ENCODE measurements at regions of chr19 and their contacts with region 1.

Region 1: GRCh38 chr19:11597202-11598102 is at the start of gene ZNF627:
- DNase-seq: peak; percentile 99
- ATAC-seq: peak; percentile 100
- H3K4me3 Mint-ChIP-seq: peak within 1 kb of the TSS; percentile 97
- H3K27ac Mint-ChIP-seq: peak within 1 kb of the TSS; percentile 91
- H3K4me1 Mint-ChIP-seq: peaks cover 34% of the 10 kb centered on the region
- H3K27me3 Mint-ChIP-seq: no peaks in the 10 kb centered on the region
- total RNA-seq, gene ZNF627: 6.4 to 6.7 TPM

Region 2: DNA sequence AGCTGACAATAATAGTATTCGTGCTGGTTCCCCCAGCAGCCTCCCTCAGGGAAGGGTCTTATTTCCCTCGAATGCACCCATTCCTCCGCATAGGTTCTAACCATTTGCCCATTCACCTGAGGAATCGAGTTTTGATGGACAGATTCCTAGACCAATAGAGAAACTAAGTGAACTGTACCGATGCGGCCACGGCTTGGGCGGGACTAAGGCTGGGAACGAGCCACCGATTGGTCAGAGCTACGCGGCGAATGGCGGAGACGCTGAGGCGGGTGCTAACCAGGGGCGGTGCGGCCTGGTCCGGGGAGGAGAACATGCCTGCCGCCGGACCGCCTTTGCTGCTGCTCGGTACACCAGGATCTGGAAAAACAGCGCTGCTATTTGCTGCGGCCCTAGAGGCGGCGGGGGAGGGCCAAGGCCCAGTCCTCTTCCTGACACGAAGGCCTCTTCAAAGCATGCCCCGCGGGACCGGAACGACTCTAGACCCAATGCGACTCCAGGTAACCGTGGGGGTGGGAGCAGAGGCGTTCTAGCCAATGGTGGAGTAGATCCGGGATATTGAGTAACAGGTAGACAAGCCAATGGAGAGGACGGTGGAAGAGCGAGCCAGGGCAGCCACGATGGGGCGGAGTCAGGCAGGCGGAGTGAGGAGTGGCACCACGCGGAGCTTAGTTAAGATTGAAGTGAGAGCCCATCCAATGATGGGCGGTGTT is 222.9 kb before region 1 on chr19 and contains the start of gene SWSAP1:
- CTCF ChIA-PET with region 1: no interaction called
- POLR2A ChIA-PET with region 1: no interaction called
- intact Hi-C with region 1: loop called in 1 of 2 experiments (anchors 2 kb)
- DNase-seq: peak; percentile 98
- ATAC-seq: peak; percentile 92
- H3K4me3 Mint-ChIP-seq: no peak within 1 kb of the TSS
- H3K27ac Mint-ChIP-seq: no peak within 1 kb of the TSS
- H3K4me1 Mint-ChIP-seq: peaks cover 28% of the 10 kb centered on the region
- H3K27me3 Mint-ChIP-seq: no peaks in the 10 kb centered on the region
- total RNA-seq, gene SWSAP1: 1.5 to 1.7 TPM

Region 3: GRCh38 chr19:11422163-11423021 is 175.1 kb before region 1 on chr19:
- CTCF ChIA-PET with region 1: no interaction called
- POLR2A ChIA-PET with region 1: no interaction called
- intact Hi-C with region 1: no loop called
- DNase-seq: peak; percentile 82
- ATAC-seq: peak; percentile 78
- H3K4me3 Mint-ChIP-seq: peak overlapping the region; percentile 52
- H3K27ac Mint-ChIP-seq: no peak overlapping the region
- H3K4me1 Mint-ChIP-seq: peaks cover 31% of the 10 kb centered on the region
- H3K27me3 Mint-ChIP-seq: peaks cover 54% of the 10 kb centered on the region

Region 4: DNA sequence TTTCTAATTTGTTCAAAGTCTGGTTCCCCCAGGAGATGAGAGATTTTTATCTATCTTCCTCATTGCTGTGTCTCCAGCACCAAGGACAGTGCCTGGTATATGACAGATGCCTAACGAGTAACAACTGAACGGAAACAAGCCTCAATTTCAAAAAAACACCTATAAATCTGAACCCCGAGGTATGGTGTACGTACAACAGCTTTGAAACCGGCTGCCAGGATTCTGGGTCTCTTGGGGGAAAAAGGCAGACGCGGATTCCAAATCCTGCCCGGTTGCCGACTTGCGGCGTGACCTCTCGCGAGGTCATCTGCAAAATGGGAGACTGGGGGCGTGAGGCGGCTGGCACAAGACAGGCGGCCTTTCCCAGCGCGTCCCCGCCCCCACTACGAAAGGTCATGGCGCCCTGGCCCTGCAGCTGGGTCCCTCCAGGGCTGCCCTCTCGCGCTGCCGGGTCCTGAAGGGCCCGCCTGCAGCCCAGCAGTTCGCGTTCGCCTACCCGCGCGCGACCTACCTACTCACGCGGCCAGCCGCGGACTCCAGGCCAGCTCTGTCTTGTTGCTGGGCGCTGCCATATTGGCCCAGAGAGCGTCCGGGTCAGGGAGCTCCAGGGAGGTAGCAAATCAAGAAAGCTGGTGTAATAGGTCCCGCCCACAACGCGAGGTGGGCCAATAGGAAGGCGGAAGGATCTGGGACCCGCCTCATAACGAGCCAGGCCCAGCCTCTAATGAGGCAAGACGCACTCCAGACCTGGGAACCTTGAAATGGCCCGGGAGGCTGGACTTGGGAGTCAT is 68.7 kb before region 1 on chr19 and contains the start of gene ECSIT:
- CTCF ChIA-PET with region 1: no interaction called
- POLR2A ChIA-PET with region 1: no interaction called
- intact Hi-C with region 1: loop called in 1 of 2 experiments (anchors 1 kb)
- DNase-seq: peak; percentile 97
- ATAC-seq: peak; percentile 97
- H3K4me3 Mint-ChIP-seq: peak within 1 kb of the TSS; percentile 99
- H3K27ac Mint-ChIP-seq: peak within 1 kb of the TSS; percentile 96
- H3K4me1 Mint-ChIP-seq: peaks cover 28% of the 10 kb centered on the region
- H3K27me3 Mint-ChIP-seq: no peaks in the 10 kb centered on the region
- total RNA-seq, gene ECSIT: 37.2 to 44.6 TPM

Region 5: DNA sequence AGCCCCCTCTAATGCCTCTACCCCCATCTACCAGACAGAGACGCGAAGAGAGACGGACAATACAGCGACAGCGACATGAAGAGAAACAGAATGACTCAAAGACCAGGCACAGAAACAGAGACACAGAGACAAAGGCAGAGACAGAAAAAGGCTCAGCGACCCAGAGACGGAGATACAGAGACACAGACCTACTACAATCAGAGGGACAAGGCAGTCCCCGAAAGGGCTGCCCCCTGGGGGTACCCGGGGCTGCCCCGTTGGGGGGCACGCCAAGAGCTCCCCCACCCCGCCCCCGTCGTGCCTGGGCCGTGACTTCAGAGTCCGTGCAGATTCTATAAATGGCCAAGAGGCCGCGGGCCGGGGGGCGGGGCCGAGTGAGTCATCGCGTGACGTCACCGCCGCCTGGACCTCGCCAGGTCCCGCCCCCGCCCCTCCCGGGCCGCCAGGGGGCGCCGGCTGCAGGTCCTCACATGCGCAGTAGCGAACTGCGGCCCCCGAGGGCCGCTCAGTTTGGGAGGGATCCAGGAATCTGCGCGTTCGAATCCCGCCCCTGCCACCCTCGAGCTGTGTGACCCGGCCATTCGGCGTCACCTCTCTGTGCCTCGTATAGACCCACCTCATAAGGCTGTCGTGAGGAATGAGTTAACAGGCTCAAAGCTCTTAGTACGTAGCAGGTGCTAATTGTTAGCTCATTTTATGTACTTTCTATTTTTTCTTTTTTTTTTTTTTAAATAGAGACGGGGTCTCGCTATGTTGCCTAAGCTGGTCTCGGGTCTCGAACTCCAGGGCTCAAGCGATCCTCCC is 61.5 kb before region 1 on chr19:
- CTCF ChIA-PET with region 1: interaction called, 3 read pairs
- POLR2A ChIA-PET with region 1: no interaction called
- intact Hi-C with region 1: loop called in 1 of 2 experiments (anchors 2 kb)
- DNase-seq: peak; percentile 94
- ATAC-seq: peak; percentile 76
- H3K4me3 Mint-ChIP-seq: peak overlapping the region; percentile 2
- H3K27ac Mint-ChIP-seq: peak overlapping the region; percentile 51
- H3K4me1 Mint-ChIP-seq: peaks cover 17% of the 10 kb centered on the region
- H3K27me3 Mint-ChIP-seq: peaks cover 14% of the 10 kb centered on the region

Region 6: DNA sequence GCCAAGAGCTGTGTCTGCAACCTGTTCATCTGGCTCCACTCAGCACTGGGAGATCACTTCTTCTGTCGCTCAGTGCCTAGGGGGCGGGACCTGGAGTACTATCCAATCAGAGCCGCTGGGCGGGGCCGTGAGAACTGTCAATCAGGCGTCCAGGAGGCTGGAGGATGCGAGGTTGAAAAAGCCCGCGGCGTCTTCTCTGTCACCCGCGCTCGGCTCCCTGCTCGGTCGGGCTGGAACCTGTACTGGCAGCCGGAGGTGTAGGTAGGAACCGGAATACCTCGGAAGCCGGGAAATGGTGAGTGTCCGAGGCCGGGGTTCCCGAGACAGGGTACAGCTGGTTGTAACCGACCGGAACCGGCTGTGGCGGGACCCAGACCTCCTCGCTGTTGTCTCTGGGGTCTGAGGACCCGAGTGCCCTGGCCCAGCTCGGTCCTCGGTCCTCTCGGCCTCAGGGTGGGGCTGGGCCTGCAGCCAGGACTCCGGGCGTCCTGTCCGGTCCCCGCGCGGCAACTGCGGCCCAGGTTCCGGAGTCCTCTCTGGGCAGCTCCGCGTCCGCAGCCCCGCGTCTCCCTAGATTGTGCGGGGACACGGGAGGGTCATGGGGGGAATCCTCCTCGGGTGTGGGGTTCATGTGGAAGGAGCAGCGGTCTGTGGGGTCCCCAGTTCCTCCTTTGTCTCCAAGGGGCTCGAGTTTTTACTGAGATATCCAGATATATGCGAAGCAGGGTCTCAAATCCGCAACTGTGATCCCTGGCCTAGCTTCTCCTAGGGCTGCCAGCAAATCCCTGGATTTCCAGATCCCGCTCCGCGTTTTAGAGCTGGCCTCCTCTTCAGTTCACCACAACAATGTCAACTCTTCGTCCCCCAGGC is 42.4 kb after region 1 on chr19:
- CTCF ChIA-PET with region 1: no interaction called
- POLR2A ChIA-PET with region 1: no interaction called
- intact Hi-C with region 1: loop called in 1 of 2 experiments (anchors 1 kb)
- DNase-seq: peak; percentile 98
- ATAC-seq: peak; percentile 100
- H3K4me3 Mint-ChIP-seq: peak overlapping the region; percentile 76
- H3K27ac Mint-ChIP-seq: no peak overlapping the region
- H3K4me1 Mint-ChIP-seq: no peaks in the 10 kb centered on the region
- H3K27me3 Mint-ChIP-seq: peaks cover 10% of the 10 kb centered on the region

Region 7: GRCh38 chr19:11738746-11739620 is 141.5 kb after region 1 on chr19 and contains the start of gene ZNF823:
- CTCF ChIA-PET with region 1: no interaction called
- POLR2A ChIA-PET with region 1: no interaction called
- intact Hi-C with region 1: loop called in 1 of 2 experiments (anchors 1 kb)
- DNase-seq: peak; percentile 99
- ATAC-seq: peak; percentile 100
- H3K4me3 Mint-ChIP-seq: peak within 1 kb of the TSS; percentile 99
- H3K27ac Mint-ChIP-seq: peak within 1 kb of the TSS; percentile 92
- H3K4me1 Mint-ChIP-seq: peaks cover 16% of the 10 kb centered on the region
- H3K27me3 Mint-ChIP-seq: no peaks in the 10 kb centered on the region
- total RNA-seq, gene ZNF823: 2.9 to 3.0 TPM

Region 8: GRCh38 chr19:11766597-11767591 is 169.4 kb after region 1 on chr19 and contains the start of gene ZNF441:
- CTCF ChIA-PET with region 1: no interaction called
- POLR2A ChIA-PET with region 1: no interaction called
- intact Hi-C with region 1: loop called in 1 of 2 experiments (anchors 2 kb)
- DNase-seq: peak; percentile 98
- ATAC-seq: peak; percentile 99
- H3K4me3 Mint-ChIP-seq: peak within 1 kb of the TSS; percentile 88
- H3K27ac Mint-ChIP-seq: peak within 1 kb of the TSS; percentile 95
- H3K4me1 Mint-ChIP-seq: peaks cover 13% of the 10 kb centered on the region
- H3K27me3 Mint-ChIP-seq: peaks cover 12% of the 10 kb centered on the region
- total RNA-seq, gene ZNF441: 4.3 to 5.0 TPM

Region 9: GRCh38 chr19:11987405-11988281 is 390.2 kb after region 1 on chr19:
- CTCF ChIA-PET with region 1: no interaction called
- POLR2A ChIA-PET with region 1: no interaction called
- intact Hi-C with region 1: no loop called
- DNase-seq: peak; percentile 98
- ATAC-seq: peak; percentile 98
- H3K4me3 Mint-ChIP-seq: peak overlapping the region; percentile 86
- H3K27ac Mint-ChIP-seq: peak overlapping the region; percentile 92
- H3K4me1 Mint-ChIP-seq: peaks cover 18% of the 10 kb centered on the region
- H3K27me3 Mint-ChIP-seq: no peaks in the 10 kb centered on the region